ENCODE measurements at regions of chr12 and their contacts with region 1.

Region 1: DNA sequence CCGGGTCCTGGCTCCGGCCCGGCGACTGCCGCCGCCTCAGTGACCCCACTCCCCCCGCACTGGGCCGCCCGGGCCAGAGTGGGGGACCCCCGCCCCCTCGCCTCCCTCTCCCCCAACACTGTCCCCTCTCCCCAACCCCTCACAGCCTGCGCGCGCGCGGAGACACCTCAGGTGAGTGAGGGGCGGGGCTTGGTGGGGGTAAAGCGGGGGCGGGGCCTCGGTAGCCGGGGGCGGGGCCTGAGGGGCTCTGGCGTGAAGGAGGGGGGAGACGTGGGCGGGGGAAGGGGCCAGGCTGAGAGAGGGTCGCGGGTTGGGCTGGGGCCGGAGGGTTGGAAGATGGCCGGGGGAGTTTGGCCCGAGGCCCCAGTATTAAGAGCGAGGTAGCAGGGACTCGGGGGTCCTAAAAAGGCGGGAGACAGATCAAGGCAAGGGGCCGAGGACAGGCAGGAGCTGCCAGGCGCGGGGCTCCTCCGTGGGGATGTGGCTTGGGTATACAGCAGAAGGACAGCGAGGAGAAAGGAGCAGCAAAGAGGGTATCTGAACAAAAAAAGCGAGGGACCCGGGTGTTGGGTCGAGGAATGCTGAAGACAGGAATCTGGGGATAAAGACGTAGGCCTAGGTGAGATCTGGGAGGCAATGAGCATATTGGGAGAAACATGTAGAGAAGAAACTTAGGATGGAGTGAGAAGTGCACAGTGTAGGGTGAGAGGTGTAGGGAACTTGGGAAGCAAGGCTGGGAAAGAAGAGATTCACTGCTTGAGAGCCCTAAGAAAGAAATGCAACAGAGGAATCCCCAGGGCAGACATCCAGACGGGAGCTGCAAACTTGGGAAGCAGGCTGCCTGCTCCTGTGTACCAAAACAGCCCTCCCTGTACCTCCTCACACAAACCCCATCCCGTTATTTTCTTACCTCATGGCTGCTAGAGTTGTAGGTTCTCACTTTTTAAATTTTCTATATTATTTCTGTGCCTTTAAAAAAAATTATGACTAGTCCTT is 10.8 kb downstream of the SUOX start:
- DNase-seq: peak; percentile 64
- H3K4me3 Mint-ChIP-seq: peak overlapping the region; percentile 90
- H3K27ac Mint-ChIP-seq: peak overlapping the region; percentile 76
- H3K4me1 Mint-ChIP-seq: peaks cover 22% of the 10 kb centered on the region
- H3K27me3 Mint-ChIP-seq: no peaks in the 10 kb centered on the region

Region 2: GRCh38 chr12:55743116-55743921 is 264.5 kb before region 1 on chr12 and contains the start of gene GDF11:
- CTCF ChIA-PET with region 1: no interaction called
- intact Hi-C with region 1: no loop called
- DNase-seq: peak; percentile 65
- H3K4me3 Mint-ChIP-seq: peak within 1 kb of the TSS; percentile 84
- H3K27ac Mint-ChIP-seq: peak within 1 kb of the TSS; percentile 13
- H3K4me1 Mint-ChIP-seq: peaks cover 27% of the 10 kb centered on the region
- H3K27me3 Mint-ChIP-seq: no peaks in the 10 kb centered on the region
- total RNA-seq, gene GDF11: 4.2 TPM

Region 3: GRCh38 chr12:56020423-56021184 is 12.7 kb after region 1 on chr12 and contains the start of gene IKZF4:
- CTCF ChIA-PET with region 1: interaction called, 40 read pairs
- intact Hi-C with region 1: loop called (anchors 1 kb)
- DNase-seq: peak; percentile 44
- H3K4me3 Mint-ChIP-seq: peak within 1 kb of the TSS; percentile 84
- H3K27ac Mint-ChIP-seq: peak within 1 kb of the TSS; percentile 80
- H3K4me1 Mint-ChIP-seq: peaks cover 30% of the 10 kb centered on the region
- H3K27me3 Mint-ChIP-seq: no peaks in the 10 kb centered on the region
- total RNA-seq, gene IKZF4: 7.5 to 8.2 TPM

Region 4: GRCh38 chr12:56688129-56688845 is 680.4 kb after region 1 on chr12 and contains the start of gene PTGES3:
- CTCF ChIA-PET with region 1: no interaction called
- intact Hi-C with region 1: no loop called
- DNase-seq: peak; percentile 99
- H3K4me3 Mint-ChIP-seq: peak within 1 kb of the TSS; percentile 90
- H3K27ac Mint-ChIP-seq: peak within 1 kb of the TSS; percentile 99
- H3K4me1 Mint-ChIP-seq: peaks cover 19% of the 10 kb centered on the region
- H3K27me3 Mint-ChIP-seq: no peaks in the 10 kb centered on the region
- total RNA-seq, gene PTGES3: 289 to 293 TPM

Measured in activated naive CD4-positive, alpha-beta T cell treated with anti-CD3 and anti-CD28 coated beads for 36 hours (primary cell).